ENCODE measurements at regions of chr2 and their contacts with region 1.

Region 1: DNA sequence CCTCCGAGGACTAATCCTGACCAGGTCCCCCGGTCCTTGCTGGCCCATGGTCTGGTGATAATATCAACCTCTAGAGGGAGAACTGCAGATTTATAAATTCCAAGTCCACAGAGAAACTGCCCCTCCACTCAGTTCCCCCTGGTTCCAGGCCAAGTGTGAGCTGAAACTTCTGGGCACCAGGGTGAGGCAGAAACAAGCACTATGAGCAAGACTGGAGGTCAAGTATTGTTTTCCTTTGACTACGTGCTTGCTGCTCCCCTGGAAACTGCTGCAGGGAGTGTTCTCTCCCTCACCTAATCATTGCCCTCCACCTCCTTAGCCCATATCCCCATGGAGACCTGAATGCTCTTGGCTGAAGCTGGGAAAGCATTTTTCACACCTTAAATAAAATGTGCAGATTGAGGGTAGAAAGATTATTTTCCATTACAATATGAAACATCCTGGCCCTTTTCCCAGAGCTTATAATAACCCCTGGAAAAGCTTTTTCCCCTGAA is 135.2 kb downstream of the RDH14 start:
- DNase-seq: no peak
- ATAC-seq: no peak
- H3K4me3 ChIP-seq: no peak overlapping the region
- H3K27ac ChIP-seq: no peak overlapping the region
- H3K4me1 ChIP-seq: no peaks in the 10 kb centered on the region
- H3K27me3 ChIP-seq: no peaks in the 10 kb centered on the region
- CTCF ChIP-seq: no peak

Region 2: DNA sequence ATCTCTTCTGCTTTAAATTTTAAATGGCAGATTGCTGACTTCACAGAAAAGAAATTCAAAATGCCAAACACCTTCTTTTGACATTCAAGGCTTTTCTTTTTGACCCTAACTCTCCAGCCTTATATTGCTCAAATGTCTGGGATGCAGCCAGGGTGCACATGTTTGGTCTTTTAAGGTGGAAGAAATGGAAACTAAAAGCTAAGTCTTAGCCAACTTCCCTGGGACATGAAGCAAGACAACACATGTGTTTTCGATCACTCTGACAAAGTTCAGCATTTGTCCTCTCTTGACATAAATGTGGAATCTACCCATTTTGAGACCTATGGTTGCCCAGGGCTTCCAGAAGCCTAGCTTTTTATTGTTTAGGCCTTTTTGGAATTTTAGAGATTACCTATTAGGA is 26.4 kb before region 1 on chr2:
- intact Hi-C with region 1: loop called in 1 of 2 experiments (anchors 1 kb)
- DNase-seq: peak; percentile 55 to 56
- ATAC-seq: peak in 1 of 4 donors; percentile 56
- H3K4me3 ChIP-seq: no peak overlapping the region
- H3K27ac ChIP-seq: no peak overlapping the region
- H3K4me1 ChIP-seq: no peaks in the 10 kb centered on the region
- H3K27me3 ChIP-seq: no peaks in the 10 kb centered on the region
- CTCF ChIP-seq: no peak

Region 3: DNA sequence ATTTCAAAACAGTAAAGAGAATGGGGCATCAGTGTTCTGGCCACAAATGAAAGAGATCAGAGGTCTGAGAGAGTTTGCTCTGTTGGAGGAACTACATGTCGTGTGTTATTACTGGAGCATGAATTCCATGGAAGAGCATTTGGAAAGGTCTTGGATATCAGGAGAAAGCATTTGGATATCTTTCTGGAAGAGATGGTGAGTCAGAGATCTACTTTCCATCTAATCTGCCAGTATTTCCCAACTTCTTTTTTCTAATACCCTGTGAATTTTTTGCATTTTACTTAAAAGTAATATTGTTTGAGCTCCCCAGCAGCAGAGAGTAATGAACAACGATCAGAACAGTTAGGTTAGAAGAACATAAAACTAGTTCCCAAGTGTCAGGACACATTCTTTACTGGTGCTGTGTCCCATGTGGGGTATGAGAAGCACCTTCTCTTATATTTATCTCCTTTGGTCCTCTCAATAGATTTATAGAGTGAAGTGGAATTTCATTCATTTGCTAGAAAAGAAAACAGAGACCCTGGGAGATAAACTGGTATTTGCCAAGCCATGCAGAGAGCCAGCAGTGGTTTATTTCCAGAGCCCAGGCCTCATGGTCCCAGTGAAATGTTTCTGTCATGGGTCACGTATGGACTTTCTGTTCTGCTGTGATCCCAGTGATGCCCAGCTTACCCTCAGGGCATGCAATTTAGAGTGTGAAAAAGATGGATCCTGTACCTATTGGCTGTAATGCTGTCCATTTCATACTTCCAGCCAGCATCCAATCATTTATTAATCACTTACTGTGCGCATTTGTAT is 294.9 kb after region 1 on chr2:
- intact Hi-C with region 1: loop called in 1 of 2 experiments (anchors 10 kb)
- DNase-seq: no peak
- ATAC-seq: no peak
- H3K4me3 ChIP-seq: no peak overlapping the region
- H3K27ac ChIP-seq: no peak overlapping the region
- H3K4me1 ChIP-seq: no peaks in the 10 kb centered on the region
- H3K27me3 ChIP-seq: no peaks in the 10 kb centered on the region
- CTCF ChIP-seq: no peak